Cardiac septum (tissue), 1 donor: ENCODE measurements at regions of chr1 and their contacts with region 1.

Region 1: GRCh38 chr1:39189592-39190041 is 14.9 kb upstream of the MACF1 start:
- DNase-seq: no peak

Region 2: GRCh38 chr1:38834937-38835827 is 354.4 kb before region 1 on chr1:
- intact Hi-C with region 1: no loop called
- DNase-seq: no peak

Region 3: DNA sequence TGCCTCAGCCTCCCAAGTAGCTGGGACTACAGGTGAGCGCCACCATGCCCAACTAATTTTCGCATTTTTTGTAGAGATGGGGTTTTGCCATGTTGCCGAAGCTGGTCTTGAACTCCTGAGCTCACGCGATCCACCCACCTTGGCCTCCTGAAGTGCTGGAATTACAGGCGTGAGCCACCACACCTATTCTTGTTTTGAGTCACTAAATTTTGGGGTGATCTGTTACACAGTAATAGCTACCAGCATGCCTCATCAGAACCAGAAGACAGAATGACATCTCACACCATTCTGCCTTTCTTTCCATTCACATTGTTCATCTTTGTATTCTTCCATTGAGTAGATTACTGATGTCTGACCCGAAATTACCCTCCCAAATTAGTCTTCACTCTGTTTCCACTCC is 257.0 kb before region 1 on chr1:
- intact Hi-C with region 1: no loop called
- DNase-seq: no peak

Region 4: GRCh38 chr1:39317910-39318633 is 128.5 kb after region 1 on chr1:
- intact Hi-C with region 1: loop called (anchors 5 kb)
- DNase-seq: no peak